Heart left ventricle (tissue), 16 donors: ENCODE measurements at regions of chrX and their contacts with region 1.

Region 1: GRCh38 chrX:13750204-13750603 is 15.7 kb downstream of the OFD1 start:
- DNase-seq: no peak
- ATAC-seq: peak in 1 of 4 donors; percentile 36
- H3K4me3 ChIP-seq: no peak overlapping the region
- H3K27ac ChIP-seq: no peak overlapping the region
- H3K4me1 ChIP-seq: no peaks in the 10 kb centered on the region
- H3K27me3 ChIP-seq: peaks cover 0 to 4% (median 0%) of the 10 kb centered on the region in 9 donors
- CTCF ChIP-seq: peak; percentile 36 to 59 (median 46)
- POLR2A ChIP-seq: no peak

Region 2: GRCh38 chrX:12814420-12814819 is 935.8 kb before region 1 on chrX:
- intact Hi-C with region 1: loop called in 1 of 10 experiments (anchors 10 kb)
- DNase-seq: peak in 2 of 5 donors; percentile 8 to 20
- ATAC-seq: peak in 1 of 4 donors; percentile 39
- H3K4me3 ChIP-seq: no peak overlapping the region
- H3K27ac ChIP-seq: no peak overlapping the region
- H3K4me1 ChIP-seq: no peaks in the 10 kb centered on the region
- H3K27me3 ChIP-seq: peaks cover 0 to 19% (median 0%) of the 10 kb centered on the region in 9 donors
- CTCF ChIP-seq: peak; percentile 11 to 51 (median 37)
- POLR2A ChIP-seq: no peak

Region 3: GRCh38 chrX:13506574-13506973 is 243.6 kb before region 1 on chrX:
- intact Hi-C with region 1: loop called in 5 of 10 experiments (anchors 5 to 10 kb)
- DNase-seq: peak in 4 of 5 donors; percentile 13 to 61 (median 28)
- ATAC-seq: no peak
- H3K4me3 ChIP-seq: no peak overlapping the region
- H3K27ac ChIP-seq: no peak overlapping the region
- H3K4me1 ChIP-seq: no peaks in the 10 kb centered on the region
- H3K27me3 ChIP-seq: peaks cover 0 to 34% (median 0%) of the 10 kb centered on the region in 9 donors
- CTCF ChIP-seq: peak; percentile 63 to 83 (median 74)
- POLR2A ChIP-seq: no peak

Region 4: GRCh38 chrX:13653022-13653693 is 97.0 kb before region 1 on chrX and contains the start of gene TCEANC:
- intact Hi-C with region 1: loop called in 9 of 10 experiments (anchors 2 to 5 kb)
- DNase-seq: peak; percentile 94 to 98 (median 97)
- ATAC-seq: peak; percentile 99 to 100 (median 100)
- H3K4me3 ChIP-seq: peak within 1 kb of the TSS; percentile 29 to 81 (median 64)
- H3K27ac ChIP-seq: peak within 1 kb of the TSS; percentile 73 to 98 (median 94)
- H3K4me1 ChIP-seq: peaks cover 0 to 18% (median 7%) of the 10 kb centered on the region in 12 donors
- H3K27me3 ChIP-seq: peaks cover 0 to 24% (median 0%) of the 10 kb centered on the region in 9 donors
- CTCF ChIP-seq: no peak
- POLR2A ChIP-seq: peak in 1 of 2 donors; percentile 67
- total RNA-seq, gene TCEANC: 1.9 to 6.8 (median 4.2) TPM

Region 5: GRCh38 chrX:13658602-13659001 is 91.6 kb before region 1 on chrX:
- intact Hi-C with region 1: loop called in 9 of 10 experiments (anchors 2 to 5 kb)
- DNase-seq: no peak
- ATAC-seq: peak in 2 of 4 donors; percentile 48 to 49
- H3K4me3 ChIP-seq: peak overlapping the region in 2 of 12 donors; percentile 13 to 21
- H3K27ac ChIP-seq: peak overlapping the region in 5 of 12 donors; percentile 54 to 69 (median 63)
- H3K4me1 ChIP-seq: peaks cover 0 to 20% (median 6%) of the 10 kb centered on the region in 12 donors
- H3K27me3 ChIP-seq: peaks cover 0 to 7% (median 0%) of the 10 kb centered on the region in 9 donors
- CTCF ChIP-seq: peak; percentile 46 to 69 (median 62)
- POLR2A ChIP-seq: no peak

Region 6: GRCh38 chrX:13717700-13718472 is 32.3 kb before region 1 on chrX:
- intact Hi-C with region 1: no loop called
- DNase-seq: no peak
- ATAC-seq: peak in 3 of 4 donors; percentile 50 to 75 (median 67)
- H3K4me3 ChIP-seq: no peak overlapping the region
- H3K27ac ChIP-seq: peak overlapping the region in 7 of 12 donors; percentile 5 to 54 (median 29)
- H3K4me1 ChIP-seq: peaks cover 0 to 25% (median 1%) of the 10 kb centered on the region in 12 donors
- H3K27me3 ChIP-seq: no peaks in the 10 kb centered on the region
- CTCF ChIP-seq: no peak
- POLR2A ChIP-seq: no peak

Region 7: DNA sequence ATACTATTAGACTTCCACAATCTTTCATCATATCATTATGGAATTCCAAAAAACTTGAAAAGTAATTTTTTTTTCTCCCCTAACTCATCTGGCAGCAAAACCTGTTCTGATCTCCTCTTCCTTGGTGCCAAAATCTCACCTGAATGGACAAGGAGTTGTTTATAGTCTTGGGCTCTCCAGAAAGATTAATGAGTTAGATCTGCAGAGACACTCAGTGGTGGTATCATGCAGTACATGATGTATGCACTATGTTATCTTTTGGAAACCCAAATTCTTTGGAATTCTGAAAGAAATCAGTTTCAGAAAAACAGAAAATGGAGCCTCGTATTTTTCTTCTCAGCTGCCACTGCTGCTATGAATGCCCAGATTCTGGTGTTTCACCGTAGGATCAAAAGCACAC is 55.0 kb after region 1 on chrX:
- intact Hi-C with region 1: loop called in 1 of 10 experiments (anchors 10 kb)
- DNase-seq: no peak
- ATAC-seq: no peak
- H3K4me3 ChIP-seq: no peak overlapping the region
- H3K27ac ChIP-seq: no peak overlapping the region
- H3K4me1 ChIP-seq: no peaks in the 10 kb centered on the region
- H3K27me3 ChIP-seq: peaks cover 0 to 28% (median 0%) of the 10 kb centered on the region in 9 donors
- CTCF ChIP-seq: peak in 3 of 12 donors; percentile 6 to 29 (median 13)
- POLR2A ChIP-seq: no peak

Region 8: DNA sequence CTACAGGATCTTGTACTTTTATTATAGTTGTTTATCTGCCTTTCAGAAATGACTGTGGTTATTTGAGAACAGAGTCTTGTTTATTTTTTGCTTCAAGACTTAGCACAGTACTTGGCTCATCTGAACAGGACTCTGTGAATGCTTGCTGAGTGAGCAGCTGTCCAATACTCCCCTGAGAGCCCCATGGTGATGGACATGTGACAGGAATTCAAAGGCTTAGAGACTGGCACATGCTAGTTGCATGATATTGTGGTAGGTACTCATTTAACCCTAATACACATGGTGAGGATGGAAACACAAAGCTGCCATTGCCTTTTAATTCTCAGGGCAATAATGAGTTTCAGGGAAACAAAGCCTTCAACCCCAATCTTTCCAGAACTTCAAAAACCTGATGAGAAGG is 182.2 kb after region 1 on chrX:
- intact Hi-C with region 1: no loop called
- DNase-seq: no peak
- ATAC-seq: no peak
- H3K4me3 ChIP-seq: no peak overlapping the region
- H3K27ac ChIP-seq: no peak overlapping the region
- H3K4me1 ChIP-seq: peaks cover 0 to 2% (median 0%) of the 10 kb centered on the region in 12 donors
- H3K27me3 ChIP-seq: peaks cover 0 to 56% (median 0%) of the 10 kb centered on the region in 9 donors
- CTCF ChIP-seq: no peak
- POLR2A ChIP-seq: no peak

Region 9: GRCh38 chrX:14228611-14229010 is 478.4 kb after region 1 on chrX:
- intact Hi-C with region 1: no loop called
- DNase-seq: no peak
- ATAC-seq: no peak
- H3K4me3 ChIP-seq: no peak overlapping the region
- H3K27ac ChIP-seq: no peak overlapping the region
- H3K4me1 ChIP-seq: no peaks in the 10 kb centered on the region
- H3K27me3 ChIP-seq: no peaks in the 10 kb centered on the region
- CTCF ChIP-seq: no peak
- POLR2A ChIP-seq: no peak